WTC11 (cell line): ENCODE measurements at regions of chr3 and their contacts with region 1.

Region 1: GRCh38 chr3:99172736-99173657 is 271.5 kb upstream of the DCBLD2 start:
- DNase-seq: peak; percentile 71
- ATAC-seq: peak; percentile 94
- H3K4me3 Mint-ChIP-seq: no peak overlapping the region
- H3K27ac Mint-ChIP-seq: no peak overlapping the region
- H3K4me1 Mint-ChIP-seq: peaks cover 4% of the 10 kb centered on the region; the same call in 1 of the 2 replicates
- H3K27me3 Mint-ChIP-seq: no peaks in the 10 kb centered on the region
- CTCF ChIP-seq: peak; percentile 48; the same call in 1 of the 2 replicates

Region 2: GRCh38 chr3:99023590-99024192 is 149.3 kb before region 1 on chr3:
- CTCF ChIA-PET with region 1: interaction called, 20 read pairs
- POLR2A ChIA-PET with region 1: no interaction called
- DNase-seq: no peak
- ATAC-seq: no peak; the same call in 1 of the 2 replicates
- H3K4me3 Mint-ChIP-seq: no peak overlapping the region
- H3K27ac Mint-ChIP-seq: no peak overlapping the region
- H3K4me1 Mint-ChIP-seq: no peaks in the 10 kb centered on the region
- H3K27me3 Mint-ChIP-seq: no peaks in the 10 kb centered on the region; the same call in 1 of the 2 replicates
- CTCF ChIP-seq: peak; percentile 31

Region 3: DNA sequence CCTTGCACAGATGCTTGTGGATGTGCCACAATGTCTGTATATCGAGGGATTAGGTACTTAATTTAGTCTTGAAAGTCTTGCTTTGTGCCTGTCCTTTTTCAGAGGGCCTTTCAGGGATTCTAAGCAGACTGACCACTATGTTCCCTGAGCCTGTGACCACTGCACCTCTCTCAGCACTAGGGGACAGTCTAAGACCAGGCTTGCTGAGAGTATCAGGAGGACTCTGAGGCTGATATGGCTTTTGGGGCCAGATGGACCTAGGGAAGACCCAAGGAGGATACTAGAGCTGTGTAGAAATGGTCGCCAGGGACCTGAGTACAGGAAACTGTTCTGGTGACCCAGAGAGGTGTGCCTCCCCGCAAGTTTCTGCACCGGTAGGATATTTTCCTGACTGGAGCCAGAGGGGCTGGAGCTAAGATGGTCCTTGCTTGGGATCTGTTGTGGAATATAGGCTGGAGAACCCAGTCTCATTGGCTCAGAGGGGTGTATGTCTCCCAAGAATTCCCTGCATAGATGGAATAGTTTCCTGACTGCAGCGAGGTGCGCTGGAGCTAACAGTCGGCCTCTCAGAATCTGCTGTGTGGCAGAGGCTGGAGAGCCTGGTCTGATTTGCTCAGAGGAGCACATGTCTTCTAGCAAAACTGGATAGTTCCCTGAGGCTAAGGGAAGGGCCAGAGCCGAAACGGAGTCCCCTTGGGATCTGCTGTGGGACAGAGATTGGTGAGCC is 58.3 kb before region 1 on chr3:
- CTCF ChIA-PET with region 1: interaction called, 14 read pairs
- POLR2A ChIA-PET with region 1: no interaction called
- DNase-seq: peak; percentile 60
- ATAC-seq: peak; percentile 99
- H3K4me3 Mint-ChIP-seq: no peak overlapping the region
- H3K27ac Mint-ChIP-seq: no peak overlapping the region
- H3K4me1 Mint-ChIP-seq: no peaks in the 10 kb centered on the region
- H3K27me3 Mint-ChIP-seq: no peaks in the 10 kb centered on the region
- CTCF ChIP-seq: peak; percentile 49